ENCODE measurements at regions of chr4 and their contacts with region 1.

Region 1: GRCh38 chr4:102449751-102450352 is 51.3 kb upstream of the NFKB1 start:
- DNase-seq: peak in 2 of 10 donors; percentile 27 to 41

Region 2: GRCh38 chr4:102610007-102610406 is 160.2 kb after region 1 on chr4:
- intact Hi-C with region 1: loop called (anchors 5 kb)
- DNase-seq: no peak

Region 3: DNA sequence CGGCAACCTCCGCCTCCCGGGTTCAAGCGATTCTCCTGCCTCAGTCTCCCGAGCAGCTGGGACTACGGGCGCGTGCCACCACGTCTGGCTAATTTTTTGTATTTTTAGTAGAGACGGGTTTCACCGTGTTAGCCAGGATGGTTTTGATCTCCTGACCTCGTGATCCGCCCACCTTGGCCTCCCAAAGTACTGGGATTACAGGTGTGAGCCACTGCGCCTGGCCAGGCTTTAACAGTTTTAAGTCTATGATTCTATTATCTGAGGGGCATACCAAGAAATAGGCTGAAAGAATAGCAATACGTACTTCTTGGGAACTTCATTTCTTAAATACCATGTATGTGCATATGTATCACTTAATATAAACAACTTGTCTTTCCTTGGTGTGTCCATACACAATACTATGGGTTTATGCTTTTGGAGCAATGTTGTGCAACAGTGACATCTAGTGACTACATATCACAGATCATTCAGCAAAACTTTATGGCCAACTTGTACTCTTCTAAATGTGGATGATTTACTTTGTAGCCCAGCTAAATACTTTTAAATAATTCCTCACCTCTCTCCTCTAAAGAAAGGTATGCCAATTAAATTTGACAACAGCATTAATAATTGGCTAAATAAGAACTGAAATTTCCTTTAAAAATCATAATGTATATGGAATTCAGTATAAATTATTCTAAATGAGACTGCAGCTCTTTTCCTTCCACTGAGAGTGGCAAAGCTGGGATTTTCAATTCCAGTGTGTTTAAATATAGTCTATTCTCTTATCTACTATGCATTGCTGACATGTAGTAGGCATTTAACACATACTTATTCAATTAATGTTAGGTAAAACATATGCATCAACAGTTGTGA is 559.2 kb after region 1 on chr4:
- intact Hi-C with region 1: loop called (anchors 5 kb)
- DNase-seq: no peak

Region 4: GRCh38 chr4:103091601-103092223 is 641.9 kb after region 1 on chr4:
- intact Hi-C with region 1: loop called (anchors 5 kb)
- DNase-seq: peak in 3 of 10 donors; percentile 12 to 54 (median 20)

Measured in posterior cingulate gyrus (tissue), 11 donors.